ENCODE measurements at regions of chr20 and their contacts with region 1.

Region 1: GRCh38 chr20:54062812-54063280 is 7.5 kb downstream of the BCAS1 start:
- DNase-seq: no peak
- ATAC-seq: peak; percentile 13

Region 2: DNA sequence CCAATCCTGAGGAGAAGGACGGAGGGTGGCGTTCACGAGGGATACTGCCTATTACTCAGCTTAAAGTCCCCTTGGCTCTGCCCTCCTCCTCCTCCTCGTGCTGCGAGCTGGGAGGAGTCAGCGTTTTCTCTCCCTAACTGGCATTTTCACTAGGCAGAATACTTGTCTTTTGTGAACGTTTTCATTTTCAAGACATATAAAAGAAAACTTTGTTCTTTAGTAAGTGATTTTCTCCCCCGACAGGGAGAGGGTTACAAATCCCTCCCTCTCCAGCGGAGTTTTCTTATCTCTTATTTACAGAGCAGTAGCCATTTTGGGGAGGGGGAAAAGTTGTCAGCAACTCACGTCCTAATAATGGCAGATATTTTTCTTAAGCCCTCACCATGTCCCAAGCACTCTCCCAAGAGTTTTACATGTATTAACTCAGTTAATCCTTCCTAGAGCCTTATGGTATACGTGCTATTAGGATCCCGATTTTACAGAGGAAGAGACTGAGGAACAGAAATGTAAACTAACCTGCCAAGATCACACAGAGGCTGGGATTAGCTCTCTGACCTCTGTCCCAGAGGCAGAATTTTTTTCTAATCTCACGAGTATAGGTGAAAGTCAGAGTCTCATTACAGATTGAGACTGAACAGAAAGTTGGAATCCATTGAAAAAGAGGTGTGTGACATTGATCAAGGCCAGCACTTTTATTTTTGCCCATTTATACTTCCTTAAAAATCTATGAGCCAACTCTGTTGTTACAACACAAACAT is 439.2 kb before region 1 on chr20:
- intact Hi-C with region 1: no loop called
- DNase-seq: peak; percentile 73 to 80
- ATAC-seq: peak; percentile 81

Region 3: DNA sequence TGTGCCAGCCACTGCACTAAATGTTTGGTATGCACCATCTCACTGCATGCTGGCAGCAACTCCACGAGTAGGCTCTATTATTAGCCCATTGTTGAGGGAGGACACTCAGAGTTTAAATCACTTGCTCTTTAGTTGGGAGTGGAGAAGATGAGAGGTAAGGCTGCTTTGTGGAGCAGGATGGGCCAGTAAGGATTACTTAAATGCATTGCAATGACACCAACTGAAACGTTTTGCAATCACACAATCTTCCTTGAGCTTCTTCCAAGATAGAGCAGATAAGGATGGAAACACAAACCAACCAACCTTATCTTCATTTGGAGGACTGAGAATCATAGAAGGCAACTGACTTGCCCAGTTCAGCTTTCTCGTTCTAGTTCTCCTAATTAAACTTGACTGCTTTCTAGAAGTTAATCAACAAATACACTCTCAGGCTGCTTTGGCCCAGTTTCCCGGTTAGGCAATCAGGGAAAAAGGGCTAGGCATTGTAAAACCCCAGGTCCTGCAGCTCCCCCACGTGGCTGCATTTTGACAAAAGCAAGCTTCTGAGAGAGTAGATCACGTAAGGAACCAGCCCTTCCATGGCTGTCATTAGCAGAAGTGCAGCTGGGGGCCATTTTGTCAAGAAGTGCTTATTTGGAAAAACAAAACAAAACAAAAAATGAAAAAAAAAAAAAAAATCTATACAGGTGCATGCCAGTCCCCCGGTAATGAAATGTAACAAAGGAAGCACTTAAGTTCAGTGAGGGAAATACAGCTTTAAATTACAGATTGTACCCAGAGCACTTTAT is 123.1 kb before region 1 on chr20:
- intact Hi-C with region 1: loop called in 1 of 2 experiments (anchors 10 kb)
- DNase-seq: peak; percentile 93 to 97
- ATAC-seq: peak; percentile 87

Measured in left colon (tissue), 2 donors.